ENCODE measurements at regions of chr12 and their contacts with region 1.

Region 1: GRCh38 chr12:122225683-122226407 is at the start of gene DIABLO:
- DNase-seq: peak; percentile 96
- H3K4me3 ChIP-seq: peak within 1 kb of the TSS; percentile 76 to 95
- H3K27ac ChIP-seq: peak within 1 kb of the TSS; percentile 98 to 100
- H3K4me1 ChIP-seq: peaks cover 17 to 37% of the 10 kb centered on the region in 2 experiments
- H3K27me3 ChIP-seq: no peaks in the 10 kb centered on the region
- CTCF ChIP-seq: no peak
- EP300 ChIP-seq: no peak
- RAD21 ChIP-seq: 0 out of 2 replicates have a peak, but pooled peaks have one; percentile 10
- polyA plus RNA-seq, gene DIABLO: 65.6 and 78.9 TPM in 2 replicates

Region 2: GRCh38 chr12:122203301-122204166 is 22.3 kb before region 1 on chr12 and contains the start of gene B3GNT4:
- CTCF ChIA-PET with region 1: interaction called, 5 read pairs
- POLR2A ChIA-PET with region 1: interaction called, 14 read pairs
- DNase-seq: peak; percentile 85
- H3K4me3 ChIP-seq: peak within 1 kb of the TSS; percentile 55 to 69
- H3K27ac ChIP-seq: peak within 1 kb of the TSS in 1 of 2 experiments; percentile 39; a peak in 1 of 4 replicates
- H3K4me1 ChIP-seq: peaks cover 0 to 27% of the 10 kb centered on the region in 2 experiments; a peak in 2 of 4 replicates
- H3K27me3 ChIP-seq: no peaks in the 10 kb centered on the region
- CTCF ChIP-seq: no peak
- EP300 ChIP-seq: no peak
- RAD21 ChIP-seq: no peak
- polyA plus RNA-seq, gene B3GNT4: 0.81 and 0.84 TPM in 2 replicates

Region 3: DNA sequence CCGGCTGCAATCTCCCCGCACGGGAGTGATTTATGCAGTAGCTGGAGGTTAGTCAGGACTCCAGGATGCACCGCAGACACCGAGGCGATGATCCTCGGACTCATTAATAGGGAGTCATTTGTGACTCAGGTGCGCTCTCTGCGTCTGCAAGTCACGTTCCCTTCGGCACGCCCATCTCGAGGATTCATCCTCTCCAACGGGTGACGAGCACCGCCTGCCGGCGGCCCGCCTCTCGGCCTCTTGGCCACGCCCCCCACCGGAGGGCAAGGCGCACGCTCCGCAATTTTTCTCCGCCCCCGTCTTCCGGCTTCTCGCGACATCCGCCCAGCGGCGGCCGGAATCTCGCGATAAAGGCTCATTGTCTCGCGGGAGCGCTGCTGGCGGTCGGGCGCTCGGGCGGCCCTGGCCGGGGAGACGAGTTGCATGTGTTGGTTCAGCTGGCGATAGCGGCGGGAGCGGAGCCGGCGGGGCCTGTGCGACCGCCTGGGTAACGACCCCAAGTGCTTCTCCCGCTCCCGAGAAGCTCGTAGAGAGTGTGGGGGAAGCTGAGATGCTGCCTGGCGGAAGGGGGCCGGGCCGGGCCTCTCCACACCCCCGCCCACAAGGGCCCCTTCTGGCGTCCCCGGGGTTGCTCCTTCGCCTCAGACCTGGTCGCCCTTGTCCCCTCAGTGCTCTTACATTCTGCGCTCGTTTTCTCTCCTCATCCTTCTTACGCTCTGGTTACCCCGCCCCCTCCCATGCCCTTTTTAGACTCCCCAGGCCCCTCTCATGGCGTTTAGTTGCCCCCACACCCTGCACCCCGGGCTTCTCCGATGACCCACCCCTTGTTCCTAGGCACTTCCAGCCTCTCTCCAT is 526.8 kb after region 1 on chr12 and contains the start of gene DENR:
- CTCF ChIA-PET with region 1: no interaction called
- POLR2A ChIA-PET with region 1: no interaction called
- DNase-seq: peak; percentile 96
- H3K4me3 ChIP-seq: peak within 1 kb of the TSS; percentile 84 to 91
- H3K27ac ChIP-seq: peak within 1 kb of the TSS; percentile 72 to 85
- H3K4me1 ChIP-seq: peaks cover 12 to 13% of the 10 kb centered on the region in 2 experiments; a peak in 3 of 4 replicates
- H3K27me3 ChIP-seq: no peaks in the 10 kb centered on the region
- CTCF ChIP-seq: peak; percentile 84
- EP300 ChIP-seq: peak in 1 of 2 experiments; percentile 25; a peak in 1 of 4 replicates
- RAD21 ChIP-seq: peak; percentile 81
- polyA plus RNA-seq, gene DENR: 19.6 and 23.2 TPM in 2 replicates

Measured in SK-N-SH (cell line).